Sciatic nerve (tissue), 2 donors: ENCODE measurements at regions of chr1 and their contacts with region 1.

Region 1: GRCh38 chr1:150072959-150073358 is 5.4 kb downstream of the VPS45 start:
- DNase-seq: no peak
- ATAC-seq: peak; percentile 73

Region 2: GRCh38 chr1:148339337-148339736 is 1733.6 kb before region 1 on chr1:
- intact Hi-C with region 1: no loop called
- DNase-seq: no peak
- ATAC-seq: no peak

Region 3: GRCh38 chr1:150106341-150106740 is 33.4 kb after region 1 on chr1:
- intact Hi-C with region 1: no loop called
- DNase-seq: no peak
- ATAC-seq: no peak

Region 4: DNA sequence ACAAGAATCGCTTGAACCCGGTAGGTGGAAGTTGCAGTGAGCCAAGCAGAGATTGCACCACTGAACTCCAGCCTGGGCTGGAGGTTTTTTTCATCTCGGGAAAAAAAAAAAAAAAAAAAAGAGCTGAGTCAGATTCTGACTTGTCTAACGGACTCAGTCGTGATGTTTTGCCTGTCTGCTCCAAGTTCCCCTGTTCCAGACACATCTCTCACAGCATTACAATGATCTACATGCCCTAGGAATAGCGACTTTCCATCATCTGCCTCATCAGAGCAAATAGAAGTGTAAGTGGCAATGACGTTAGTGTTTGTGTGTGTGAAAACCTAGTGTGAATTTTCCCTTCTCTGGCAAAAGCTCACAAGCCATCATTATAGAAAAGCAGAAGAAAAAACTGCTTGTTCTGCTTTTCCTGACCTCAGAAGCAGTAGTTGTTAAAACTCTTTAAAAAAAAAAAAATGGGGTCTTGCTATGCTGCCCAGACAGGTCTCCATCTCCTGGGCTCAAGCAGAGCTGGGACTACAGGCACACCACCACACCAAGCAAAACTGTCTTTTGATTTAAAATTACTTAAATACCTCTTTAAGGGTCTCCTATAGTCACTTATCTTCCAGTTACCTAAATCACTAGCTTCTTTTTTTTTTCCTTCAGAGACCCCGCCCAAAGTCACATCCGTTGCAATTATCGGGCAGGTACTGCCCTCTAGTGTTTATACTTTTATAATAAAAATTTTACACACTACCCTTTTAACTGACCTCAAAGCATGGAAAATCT is 114.0 kb after region 1 on chr1:
- intact Hi-C with region 1: loop called (anchors 2 kb)
- DNase-seq: no peak
- ATAC-seq: peak; percentile 87